Ovary (tissue), 10 donors: ENCODE measurements at regions of chr2 and their contacts with region 1.

Region 1: GRCh38 chr2:32683520-32684086 is 55.8 kb downstream of the TTC27 start:
- DNase-seq: no peak
- H3K4me3 ChIP-seq: no peak overlapping the region
- H3K27ac ChIP-seq: no peak overlapping the region
- H3K4me1 ChIP-seq: no peaks in the 10 kb centered on the region
- H3K27me3 ChIP-seq: no peaks in the 10 kb centered on the region
- CTCF ChIP-seq: no peak
- EP300 ChIP-seq: no peak
- POLR2A ChIP-seq: no peak

Region 2: DNA sequence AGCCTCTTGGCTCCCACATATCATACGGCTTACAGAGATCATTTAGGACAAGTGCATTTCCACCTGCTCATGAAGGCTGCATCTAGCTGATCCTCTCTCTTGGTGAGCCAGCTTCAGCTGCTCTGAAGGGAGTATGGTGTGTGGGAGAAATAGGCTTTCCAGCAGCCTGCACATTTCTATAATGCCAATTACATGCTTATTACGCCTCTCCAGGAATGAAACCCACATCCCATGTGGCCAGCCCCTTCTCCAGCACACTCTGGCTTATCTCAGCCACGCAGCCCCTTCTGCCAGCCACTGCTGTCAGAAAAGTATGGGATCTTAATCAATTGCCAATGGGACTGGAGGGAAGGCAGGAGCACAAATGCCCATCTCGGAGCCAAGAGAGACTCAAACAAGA is 1662.9 kb before region 1 on chr2:
- intact Hi-C with region 1: no loop called
- DNase-seq: no peak
- H3K4me3 ChIP-seq: no peak overlapping the region
- H3K27ac ChIP-seq: no peak overlapping the region
- H3K4me1 ChIP-seq: no peaks in the 10 kb centered on the region
- H3K27me3 ChIP-seq: no peaks in the 10 kb centered on the region
- CTCF ChIP-seq: no peak
- EP300 ChIP-seq: no peak
- POLR2A ChIP-seq: no peak

Region 3: GRCh38 chr2:32723467-32724079 is 40.0 kb after region 1 on chr2:
- intact Hi-C with region 1: loop called in 1 of 4 experiments (anchors 2 kb)
- DNase-seq: no peak
- H3K4me3 ChIP-seq: no peak overlapping the region
- H3K27ac ChIP-seq: no peak overlapping the region
- H3K4me1 ChIP-seq: peaks cover 4% of the 10 kb centered on the region
- H3K27me3 ChIP-seq: no peaks in the 10 kb centered on the region
- CTCF ChIP-seq: no peak
- EP300 ChIP-seq: no peak
- POLR2A ChIP-seq: no peak